A673 (cell line): ENCODE measurements at regions of chrX and their contacts with region 1.

Region 1: DNA sequence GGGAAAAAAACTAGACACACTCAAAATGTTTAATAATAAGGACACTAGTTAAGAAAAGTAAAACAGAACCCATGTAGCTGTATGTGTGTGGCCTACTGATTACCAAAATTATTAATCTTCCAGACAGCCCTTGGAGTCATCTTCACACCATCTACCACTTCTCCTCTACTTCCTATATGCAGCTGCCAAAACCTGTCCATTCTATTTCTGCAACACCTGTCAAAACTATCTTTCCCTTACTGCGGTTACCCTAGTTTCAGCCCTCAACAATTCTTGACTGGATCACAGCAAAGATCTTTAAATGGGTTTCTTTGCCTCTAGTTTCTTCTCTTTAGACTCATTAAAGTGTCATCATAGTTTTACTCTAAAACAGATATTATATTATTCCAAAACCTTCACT is 72.6 kb downstream of the GPR82 start:
- DNase-seq: no peak
- H3K4me3 ChIP-seq: no peak overlapping the region
- H3K27ac ChIP-seq: no peak overlapping the region
- H3K4me1 ChIP-seq: no peaks in the 10 kb centered on the region
- H3K27me3 ChIP-seq: no peaks in the 10 kb centered on the region
- CTCF ChIP-seq: no peak

Region 2: GRCh38 chrX:43333543-43333942 is 1537.0 kb after region 1 on chrX:
- CTCF ChIA-PET with region 1: no interaction called
- POLR2A ChIA-PET with region 1: no interaction called
- intact Hi-C with region 1: loop called (anchors 10 kb)
- DNase-seq: peak; percentile 6
- H3K4me3 ChIP-seq: no peak overlapping the region
- H3K27ac ChIP-seq: no peak overlapping the region
- H3K4me1 ChIP-seq: no peaks in the 10 kb centered on the region
- H3K27me3 ChIP-seq: no peaks in the 10 kb centered on the region
- CTCF ChIP-seq: peak; percentile 31; the same call in 1 of the 2 replicates